Activated T-helper 2 cell treated with anti-CD3 and anti-CD28 coated beads, Interferon-gamma antibody, Interleukin-2, Interleukin-4, amounts not matched to agents 10 μg/mL and 5 μg/mL and 100 μg/mL, durations not matched to agents 14 hours and 24 hours and 36 hours (primary cell): ENCODE measurements at regions of chr7 and their contacts with region 1.

Region 1: DNA sequence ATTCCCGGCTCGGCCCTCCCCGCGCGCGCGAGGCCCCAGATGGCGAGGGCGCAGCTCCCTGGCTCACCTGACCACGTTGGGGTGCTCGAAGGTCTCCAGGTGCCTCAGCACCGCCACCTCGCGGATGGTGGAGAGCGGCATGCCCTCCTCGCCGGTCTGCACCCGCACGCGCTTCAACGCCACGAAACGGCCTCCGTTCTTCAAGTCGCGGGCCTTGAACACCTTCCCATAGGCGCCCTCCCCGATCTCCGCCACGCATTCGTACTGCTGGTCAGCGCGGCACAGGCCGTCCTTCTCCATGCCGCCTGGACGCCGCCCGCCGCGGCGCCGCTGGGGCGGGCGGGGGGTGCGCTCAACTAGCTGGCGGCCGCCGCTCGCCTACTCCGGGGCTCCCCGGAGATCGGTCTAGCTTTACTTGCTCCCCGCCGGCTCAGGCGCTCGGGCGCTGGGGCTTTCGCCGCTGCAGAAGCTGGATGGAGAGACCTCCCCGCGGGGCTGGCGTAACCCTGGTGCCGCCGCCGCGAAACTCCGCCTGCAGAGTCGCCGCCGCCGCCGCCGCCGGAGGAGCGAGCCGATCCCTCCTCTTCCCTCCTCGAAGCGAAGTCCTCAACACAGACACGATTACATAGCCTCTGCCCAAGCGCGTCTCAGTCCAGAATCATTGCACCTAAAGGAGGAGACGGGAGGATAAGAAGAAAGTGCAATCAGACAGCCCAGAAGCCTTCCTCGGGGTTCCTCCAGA is 3.2 kb downstream of the CDK6 start:
- DNase-seq: peak; percentile 87
- H3K4me3 Mint-ChIP-seq: peak overlapping the region; percentile 94
- H3K27ac Mint-ChIP-seq: peak overlapping the region; percentile 98
- H3K4me1 Mint-ChIP-seq: peaks cover 40% of the 10 kb centered on the region
- H3K27me3 Mint-ChIP-seq: no peaks in the 10 kb centered on the region

Region 2: GRCh38 chr7:92621026-92621540 is 212.1 kb before region 1 on chr7:
- intact Hi-C with region 1: loop called (anchors 1 kb)
- DNase-seq: peak; percentile 73
- H3K4me3 Mint-ChIP-seq: peak overlapping the region; percentile 37
- H3K27ac Mint-ChIP-seq: peak overlapping the region; percentile 87
- H3K4me1 Mint-ChIP-seq: peaks cover 57% of the 10 kb centered on the region
- H3K27me3 Mint-ChIP-seq: no peaks in the 10 kb centered on the region

Region 3: DNA sequence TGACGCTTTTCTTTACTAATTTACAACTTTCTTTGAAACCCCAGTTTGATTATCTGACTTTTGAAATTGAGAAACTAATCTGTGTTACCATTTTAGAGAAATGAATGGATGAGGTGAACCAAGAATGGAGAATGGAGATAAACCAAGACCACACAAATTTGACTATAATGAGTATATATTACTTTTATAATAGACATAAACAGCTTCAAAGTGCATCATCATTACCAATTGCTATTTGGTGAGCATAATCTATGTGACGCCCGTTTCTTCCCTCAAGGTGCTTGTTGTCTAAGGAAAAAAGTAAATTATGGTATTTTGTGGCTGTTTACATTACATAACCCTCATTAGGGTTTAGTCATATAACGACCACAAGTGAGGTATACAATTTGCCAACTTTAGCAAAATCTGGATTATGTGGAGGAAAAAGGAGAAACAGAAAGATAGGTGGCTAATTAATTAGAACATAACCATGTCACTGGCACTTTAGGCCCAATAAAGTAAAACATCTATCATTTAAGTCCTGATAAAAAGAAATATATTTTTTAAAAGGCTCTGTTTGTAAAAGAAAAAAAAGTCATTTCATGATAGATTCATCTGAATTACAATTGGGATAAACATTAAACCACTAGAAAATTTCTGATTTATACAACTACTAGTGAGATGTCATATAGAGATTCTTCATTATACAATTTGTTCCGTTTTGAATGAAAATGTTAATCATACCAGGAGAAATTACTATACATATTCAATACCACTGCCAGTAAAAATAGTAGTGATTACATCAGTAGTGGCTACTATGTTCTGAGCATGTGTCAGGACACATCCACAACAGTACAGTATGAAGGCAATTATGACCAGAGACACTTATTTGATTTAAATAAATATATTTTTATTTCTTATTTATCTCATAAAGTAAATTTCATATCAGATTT is 124.8 kb before region 1 on chr7:
- intact Hi-C with region 1: loop called (anchors 5 kb)
- DNase-seq: no peak
- H3K4me3 Mint-ChIP-seq: no peak overlapping the region
- H3K27ac Mint-ChIP-seq: peak overlapping the region; percentile 64
- H3K4me1 Mint-ChIP-seq: peaks cover 43% of the 10 kb centered on the region
- H3K27me3 Mint-ChIP-seq: no peaks in the 10 kb centered on the region

Region 4: DNA sequence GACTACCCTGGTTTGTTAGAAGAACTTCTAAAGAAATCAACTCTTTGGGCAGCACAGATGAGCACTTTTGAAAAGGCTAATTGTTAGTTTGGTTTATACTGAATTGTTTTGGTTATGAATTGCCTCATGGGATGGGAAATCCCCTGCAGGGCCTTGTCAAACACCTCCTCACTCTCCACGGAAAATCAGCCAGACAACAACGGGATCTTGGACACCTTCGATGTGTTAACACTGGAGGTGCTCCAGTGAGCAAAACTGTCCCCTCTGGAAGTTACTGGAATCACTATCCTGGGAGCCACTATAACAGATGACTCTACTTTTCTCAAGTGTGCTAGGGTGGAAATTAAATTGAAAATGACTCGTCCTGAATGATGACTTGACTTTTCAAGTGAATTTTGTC is 35.5 kb before region 1 on chr7:
- intact Hi-C with region 1: loop called (anchors 5 kb)
- DNase-seq: no peak
- H3K4me3 Mint-ChIP-seq: no peak overlapping the region
- H3K27ac Mint-ChIP-seq: no peak overlapping the region
- H3K4me1 Mint-ChIP-seq: peaks cover 36% of the 10 kb centered on the region
- H3K27me3 Mint-ChIP-seq: no peaks in the 10 kb centered on the region

Region 5: DNA sequence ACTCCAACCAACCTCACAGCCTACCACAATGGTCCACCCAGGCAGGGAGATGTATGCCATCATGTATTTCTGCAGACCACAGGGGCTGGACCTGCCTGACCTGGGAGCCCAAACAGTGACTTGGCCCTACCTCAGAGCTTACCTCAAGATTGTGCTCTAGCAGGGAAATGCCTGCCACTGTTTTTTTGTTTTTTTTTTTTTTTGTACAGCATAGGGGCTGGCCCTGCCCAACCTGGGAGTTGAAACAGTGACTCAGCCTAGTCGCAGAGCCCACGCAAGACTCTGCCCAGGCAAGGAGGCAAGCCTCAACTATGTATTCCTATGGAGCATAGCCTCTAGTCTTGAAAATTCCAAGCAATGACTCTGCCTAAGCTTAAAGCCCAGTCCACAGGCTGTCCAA is 42.5 kb after region 1 on chr7:
- intact Hi-C with region 1: loop called (anchors 2 kb)
- DNase-seq: no peak
- H3K4me3 Mint-ChIP-seq: no peak overlapping the region
- H3K27ac Mint-ChIP-seq: peak overlapping the region; percentile 50
- H3K4me1 Mint-ChIP-seq: peaks cover 50% of the 10 kb centered on the region
- H3K27me3 Mint-ChIP-seq: no peaks in the 10 kb centered on the region

Region 6: DNA sequence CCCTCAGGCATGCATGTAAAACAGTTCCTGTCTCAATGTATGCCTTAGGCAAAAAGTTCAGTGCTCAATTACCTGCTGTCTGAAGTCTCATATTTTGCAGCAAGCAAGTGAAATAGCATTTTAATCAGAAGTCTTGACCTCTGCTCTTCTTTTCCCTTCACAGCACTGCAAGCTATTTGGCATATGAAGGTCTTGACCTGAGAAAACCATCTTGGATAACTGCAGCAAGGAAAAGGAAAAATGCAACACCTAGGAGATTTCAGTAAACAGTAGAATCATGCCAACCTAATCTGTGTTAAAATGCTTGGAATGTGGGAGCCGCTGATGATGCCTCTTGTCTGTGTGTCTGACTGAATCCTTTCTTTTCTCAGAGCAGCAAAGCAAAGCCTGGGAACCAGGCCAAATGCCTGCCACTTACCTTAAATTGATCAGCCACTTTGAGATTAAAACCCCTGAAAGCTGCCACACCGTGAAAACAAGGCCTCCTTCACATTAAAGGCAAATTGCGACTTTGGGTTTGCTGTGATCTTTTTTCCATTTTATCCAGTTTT is 83.6 kb after region 1 on chr7:
- intact Hi-C with region 1: no loop called
- DNase-seq: no peak
- H3K4me3 Mint-ChIP-seq: no peak overlapping the region
- H3K27ac Mint-ChIP-seq: no peak overlapping the region
- H3K4me1 Mint-ChIP-seq: no peaks in the 10 kb centered on the region
- H3K27me3 Mint-ChIP-seq: no peaks in the 10 kb centered on the region

Region 7: DNA sequence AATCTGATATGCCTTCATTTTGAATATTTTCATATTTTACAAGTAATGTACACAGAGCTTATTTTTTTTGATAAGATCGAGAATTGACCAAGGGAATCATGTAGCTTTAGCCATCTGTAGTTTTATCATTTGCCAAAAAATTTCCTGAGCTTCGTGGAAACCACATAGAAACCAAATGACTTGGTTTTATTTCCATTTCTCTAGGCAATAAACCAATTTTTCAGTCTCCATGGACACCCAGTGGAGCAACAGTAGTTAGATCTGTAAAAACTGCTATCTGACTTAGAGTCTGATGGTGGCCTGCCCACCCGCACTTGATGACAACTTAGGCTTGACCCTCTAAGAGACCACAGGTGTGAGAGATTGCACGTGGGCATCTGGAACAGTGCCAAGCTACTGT is 130.9 kb after region 1 on chr7:
- intact Hi-C with region 1: no loop called
- DNase-seq: no peak
- H3K4me3 Mint-ChIP-seq: no peak overlapping the region
- H3K27ac Mint-ChIP-seq: no peak overlapping the region
- H3K4me1 Mint-ChIP-seq: peaks cover 2% of the 10 kb centered on the region
- H3K27me3 Mint-ChIP-seq: no peaks in the 10 kb centered on the region

Region 8: GRCh38 chr7:93055543-93056107 is 222.4 kb after region 1 on chr7:
- intact Hi-C with region 1: loop called (anchors 1 kb)
- DNase-seq: no peak
- H3K4me3 Mint-ChIP-seq: no peak overlapping the region
- H3K27ac Mint-ChIP-seq: no peak overlapping the region
- H3K4me1 Mint-ChIP-seq: peaks cover 21% of the 10 kb centered on the region
- H3K27me3 Mint-ChIP-seq: no peaks in the 10 kb centered on the region